MCF 10A (cell line): ENCODE measurements at regions of chr5 and their contacts with region 1.

Region 1: GRCh38 chr5:54457094-54457862 is 1.8 kb downstream of the HSPB3 start:
- DNase-seq: peak; percentile 60
- H3K4me3 Mint-ChIP-seq: no peak overlapping the region
- H3K27ac Mint-ChIP-seq: no peak overlapping the region
- H3K4me1 Mint-ChIP-seq: peaks cover 9% of the 10 kb centered on the region
- H3K27me3 Mint-ChIP-seq: no peaks in the 10 kb centered on the region
- CTCF ChIP-seq: no peak

Region 2: DNA sequence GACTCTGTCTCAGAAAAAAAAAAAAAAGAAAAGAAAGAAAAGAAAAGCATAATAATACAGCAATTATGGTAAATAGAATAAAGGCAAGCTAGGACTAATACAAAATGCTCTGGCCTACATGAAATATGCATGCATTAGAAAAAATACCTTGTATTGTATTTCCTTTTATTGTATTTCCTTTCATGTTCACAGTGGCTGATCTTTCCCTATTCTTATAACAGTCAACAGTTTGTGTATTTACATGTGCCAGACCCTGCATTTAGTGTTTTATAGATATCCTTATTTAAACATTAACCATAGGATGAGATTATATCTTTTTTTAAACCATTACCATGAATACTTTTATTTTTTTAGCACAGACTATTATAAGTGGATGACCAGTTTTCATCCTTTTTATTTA is 90.6 kb before region 1 on chr5:
- CTCF ChIA-PET with region 1: no interaction called
- POLR2A ChIA-PET with region 1: no interaction called
- intact Hi-C with region 1: no loop called
- DNase-seq: no peak
- H3K4me3 Mint-ChIP-seq: no peak overlapping the region
- H3K27ac Mint-ChIP-seq: no peak overlapping the region
- H3K4me1 Mint-ChIP-seq: peaks cover 4% of the 10 kb centered on the region
- H3K27me3 Mint-ChIP-seq: no peaks in the 10 kb centered on the region
- CTCF ChIP-seq: no peak

Region 3: DNA sequence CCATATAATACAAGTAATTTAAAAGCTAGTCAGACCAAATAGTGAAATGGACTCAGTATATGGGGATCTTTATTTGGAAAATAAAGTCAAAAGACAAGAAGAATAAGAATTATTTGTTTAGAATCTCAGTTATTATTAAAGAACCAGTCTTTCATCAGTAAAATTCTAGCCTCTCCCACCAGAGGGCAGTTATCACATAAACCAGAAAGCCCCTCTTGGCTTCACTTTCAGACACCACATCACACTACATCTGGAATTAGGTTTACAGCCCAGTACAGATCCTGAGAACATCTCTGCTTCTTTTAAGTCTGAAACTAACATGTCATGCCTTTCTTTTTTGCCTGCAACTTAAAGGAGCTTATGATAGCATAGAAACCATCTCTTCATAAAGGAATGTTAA is 14.0 kb before region 1 on chr5:
- CTCF ChIA-PET with region 1: interaction called, 17 read pairs
- POLR2A ChIA-PET with region 1: interaction called, 6 read pairs
- intact Hi-C with region 1: no loop called
- DNase-seq: peak; percentile 33
- H3K4me3 Mint-ChIP-seq: no peak overlapping the region
- H3K27ac Mint-ChIP-seq: no peak overlapping the region
- H3K4me1 Mint-ChIP-seq: no peaks in the 10 kb centered on the region
- H3K27me3 Mint-ChIP-seq: peaks cover 10% of the 10 kb centered on the region
- CTCF ChIP-seq: peak; percentile 43

Region 4: DNA sequence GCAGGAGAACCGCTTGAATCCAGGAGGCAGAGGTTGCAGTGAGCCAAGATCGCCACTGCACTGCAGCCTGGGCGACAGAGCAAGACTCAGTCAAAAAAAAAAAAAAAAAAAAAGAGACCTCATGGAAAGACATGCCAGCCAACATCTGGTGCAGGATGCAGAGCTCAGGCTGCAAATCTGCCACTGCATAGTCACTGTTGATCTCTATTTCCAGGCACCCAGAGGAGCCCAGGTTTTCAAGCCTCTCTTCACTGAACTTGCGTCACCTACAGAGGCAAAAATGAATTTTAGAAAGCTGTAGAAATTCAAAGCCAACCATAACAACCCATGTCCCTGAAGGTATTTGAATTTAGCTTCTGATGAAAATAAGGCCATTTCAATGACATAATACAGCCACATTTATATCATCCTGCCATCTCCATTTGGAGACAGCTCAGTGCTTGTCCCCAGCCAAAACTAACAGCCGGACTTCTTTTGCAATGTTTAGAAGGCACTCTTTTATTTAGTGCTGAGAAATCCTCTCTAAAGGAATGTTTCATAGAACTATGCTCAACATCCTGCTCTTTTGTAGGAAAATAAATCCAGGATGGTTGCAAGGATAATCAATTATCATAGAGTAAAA is 173.6 kb after region 1 on chr5:
- CTCF ChIA-PET with region 1: no interaction called
- POLR2A ChIA-PET with region 1: no interaction called
- intact Hi-C with region 1: no loop called
- DNase-seq: no peak
- H3K4me3 Mint-ChIP-seq: no peak overlapping the region
- H3K27ac Mint-ChIP-seq: no peak overlapping the region
- H3K4me1 Mint-ChIP-seq: no peaks in the 10 kb centered on the region
- H3K27me3 Mint-ChIP-seq: no peaks in the 10 kb centered on the region
- CTCF ChIP-seq: no peak